Activated CD4-positive, alpha-beta T cell treated with anti-CD3 and anti-CD28 coated beads for 36 hours (primary cell): ENCODE measurements at regions of chr2 and their contacts with region 1.

Region 1: DNA sequence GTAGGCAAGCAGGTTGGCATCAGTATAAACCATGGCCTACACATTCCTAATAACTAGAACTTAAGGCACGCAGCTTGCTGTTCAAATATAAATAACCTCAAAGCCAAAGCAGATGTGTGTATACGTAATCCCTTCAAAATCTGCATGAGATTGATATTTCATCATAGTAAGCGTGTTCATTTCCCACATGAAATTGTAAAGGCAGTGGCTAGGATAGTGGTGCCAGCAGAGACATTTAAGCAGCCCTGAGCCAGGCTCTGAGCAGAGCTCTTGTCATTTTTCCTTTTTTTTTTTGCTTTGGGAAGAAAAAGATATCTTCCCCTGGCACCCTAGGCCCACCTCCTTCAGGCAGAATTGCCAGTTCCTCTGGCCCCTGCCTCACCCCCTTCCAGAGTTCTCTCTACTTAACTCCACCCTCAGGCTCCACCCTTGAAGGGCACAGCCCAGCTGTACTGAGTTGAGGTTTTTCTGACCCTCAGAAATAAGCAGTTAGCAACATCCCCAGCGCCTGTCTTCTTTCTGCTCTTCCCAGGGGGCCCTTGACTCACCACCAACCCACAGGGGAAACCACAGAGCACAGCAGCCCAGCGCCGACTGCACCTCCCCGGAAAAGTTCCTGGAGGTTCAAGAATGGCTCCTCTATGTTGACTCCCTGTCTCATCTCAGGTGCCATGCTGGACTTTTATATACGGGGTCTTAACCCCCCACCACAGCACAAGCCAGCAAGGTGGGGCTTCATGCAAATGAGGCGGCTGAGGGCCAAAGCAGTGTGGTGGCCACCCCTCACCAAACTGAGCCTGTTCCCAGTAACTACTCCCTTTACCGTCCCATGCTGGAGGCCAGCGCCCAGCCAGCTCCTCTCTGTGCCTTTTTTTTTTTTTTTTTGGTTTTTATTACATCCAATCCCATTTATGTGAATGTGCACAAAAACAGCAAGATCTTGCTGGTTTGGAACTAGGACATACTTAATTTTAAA is 84.7 kb downstream of the EHD3 start:
- DNase-seq: peak; percentile 69
- ATAC-seq: peak; percentile 61
- H3K4me3 Mint-ChIP-seq: no peak overlapping the region
- H3K27ac Mint-ChIP-seq: peak overlapping the region; percentile 22
- H3K4me1 Mint-ChIP-seq: peaks cover 51% of the 10 kb centered on the region
- H3K27me3 Mint-ChIP-seq: no peaks in the 10 kb centered on the region

Region 2: DNA sequence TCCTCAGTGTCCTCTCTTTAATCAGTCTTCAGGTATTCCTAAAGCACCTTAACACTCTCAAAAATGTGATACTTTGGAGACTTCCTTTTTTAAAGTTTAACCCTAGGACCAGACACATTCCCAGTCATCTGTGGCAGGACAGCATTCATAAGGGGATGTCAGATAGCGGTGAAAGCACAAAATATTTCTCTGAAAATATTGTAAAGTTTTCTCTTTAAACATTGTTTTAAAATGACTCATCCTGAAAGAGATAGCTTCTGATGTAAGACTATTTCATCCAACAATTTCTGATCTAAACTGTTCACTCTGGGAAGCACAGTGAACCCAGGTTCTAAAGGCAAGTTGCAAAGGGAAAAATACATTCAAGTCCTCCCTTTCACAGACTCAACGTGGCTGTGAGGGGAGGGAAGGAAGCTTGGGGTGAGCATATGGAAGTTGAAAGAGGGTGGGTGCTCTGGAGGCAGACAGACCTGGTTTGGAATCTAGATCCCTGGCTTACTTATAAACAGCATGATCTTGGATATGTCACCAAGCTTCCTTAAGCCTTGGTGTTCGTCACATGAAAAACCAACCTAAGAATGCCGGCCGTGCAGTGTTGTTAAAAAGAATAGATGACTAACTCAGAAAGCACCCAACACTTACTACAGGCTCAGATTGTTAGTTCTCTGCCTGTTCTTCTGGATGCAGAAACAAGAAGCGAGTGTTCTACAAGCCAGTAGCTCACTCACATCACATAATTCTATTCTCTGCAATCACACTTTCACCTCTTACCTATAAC is 192.5 kb before region 1 on chr2:
- CTCF ChIA-PET with region 1: no interaction called
- POLR2A ChIA-PET with region 1: no interaction called
- intact Hi-C with region 1: no loop called
- DNase-seq: no peak
- ATAC-seq: no peak
- H3K4me3 Mint-ChIP-seq: no peak overlapping the region
- H3K27ac Mint-ChIP-seq: no peak overlapping the region
- H3K4me1 Mint-ChIP-seq: no peaks in the 10 kb centered on the region
- H3K27me3 Mint-ChIP-seq: peaks cover 13% of the 10 kb centered on the region

Region 3: GRCh38 chr2:31297751-31298150 is 20.9 kb before region 1 on chr2:
- CTCF ChIA-PET with region 1: interaction called, 3 read pairs
- POLR2A ChIA-PET with region 1: no interaction called
- intact Hi-C with region 1: loop called in 1 of 2 experiments (anchors 2 kb)
- DNase-seq: peak; percentile 24
- ATAC-seq: peak; percentile 97
- H3K4me3 Mint-ChIP-seq: no peak overlapping the region
- H3K27ac Mint-ChIP-seq: no peak overlapping the region
- H3K4me1 Mint-ChIP-seq: peaks cover 4% of the 10 kb centered on the region
- H3K27me3 Mint-ChIP-seq: no peaks in the 10 kb centered on the region